Naive thymus-derived CD8-positive, alpha-beta T cell (primary cell): ENCODE measurements at regions of chr11 and their contacts with region 1.

Region 1: DNA sequence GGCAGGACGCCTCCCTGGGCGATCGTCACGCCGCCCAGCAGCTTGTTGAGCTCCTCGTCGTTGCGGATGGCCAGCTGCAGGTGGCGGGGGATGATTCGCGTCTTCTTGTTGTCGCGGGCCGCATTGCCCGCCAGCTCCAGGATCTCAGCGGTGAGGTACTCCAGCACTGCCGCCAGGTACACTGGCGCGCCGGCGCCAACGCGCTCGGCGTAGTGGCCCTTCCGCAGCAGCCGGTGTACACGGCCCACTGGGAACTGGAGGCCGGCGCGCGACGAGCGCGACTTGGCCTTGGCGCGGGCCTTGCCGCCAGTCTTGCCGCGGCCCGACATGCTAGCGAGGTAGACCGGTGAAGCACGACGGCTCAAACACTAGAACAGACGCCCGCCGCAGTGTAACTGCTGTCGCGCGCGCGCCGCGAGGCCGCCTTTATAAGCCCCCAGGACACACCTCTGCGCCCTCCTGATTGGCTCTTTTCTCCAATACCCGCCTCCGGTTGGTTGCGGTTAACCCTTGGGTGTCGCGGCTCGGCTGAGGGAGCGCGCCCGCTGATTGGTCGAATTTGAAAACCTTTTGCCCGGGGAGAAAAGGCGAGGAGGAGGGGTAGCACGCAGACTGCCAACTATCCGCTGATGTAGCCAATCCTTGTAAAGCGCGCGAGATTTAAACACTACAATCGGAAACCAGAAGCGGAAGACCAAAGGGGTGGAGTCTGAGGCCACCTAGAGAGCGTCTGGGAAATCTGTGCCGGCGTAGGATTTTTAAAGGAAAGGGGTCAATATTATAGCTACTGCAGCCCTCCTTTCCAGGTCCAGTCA is 6.4 kb downstream of the DPAGT1 start:
- DNase-seq: peak; percentile 96 to 100 (median 100)
- ATAC-seq: peak; percentile 88 to 91
- H3K4me3 Mint-ChIP-seq: peak overlapping the region; percentile 89 to 95 (median 92)
- H3K27ac Mint-ChIP-seq: peak overlapping the region; percentile 79 to 98 (median 93)
- H3K4me1 Mint-ChIP-seq: peaks cover 24 to 42% (median 37%) of the 10 kb centered on the region in 4 donors
- H3K27me3 Mint-ChIP-seq: peaks cover 0 to 3% (median 0%) of the 10 kb centered on the region in 5 donors

Region 2: GRCh38 chr11:119057000-119057769 is 38.1 kb before region 1 on chr11 and contains the start of gene HYOU1:
- POLR2A ChIA-PET with region 1: interaction called, 18 read pairs
- DNase-seq: peak; percentile 92 to 100 (median 98)
- ATAC-seq: peak; percentile 90 to 93
- H3K4me3 Mint-ChIP-seq: peak within 1 kb of the TSS; percentile 91 to 99 (median 96)
- H3K27ac Mint-ChIP-seq: peak within 1 kb of the TSS; percentile 93 to 99 (median 97)
- H3K4me1 Mint-ChIP-seq: peaks cover 18 to 47% (median 36%) of the 10 kb centered on the region in 4 donors
- H3K27me3 Mint-ChIP-seq: no peaks in the 10 kb centered on the region
- polyA plus RNA-seq, gene HYOU1: 14.1 to 17.1 (median 15.8) TPM

Region 3: DNA sequence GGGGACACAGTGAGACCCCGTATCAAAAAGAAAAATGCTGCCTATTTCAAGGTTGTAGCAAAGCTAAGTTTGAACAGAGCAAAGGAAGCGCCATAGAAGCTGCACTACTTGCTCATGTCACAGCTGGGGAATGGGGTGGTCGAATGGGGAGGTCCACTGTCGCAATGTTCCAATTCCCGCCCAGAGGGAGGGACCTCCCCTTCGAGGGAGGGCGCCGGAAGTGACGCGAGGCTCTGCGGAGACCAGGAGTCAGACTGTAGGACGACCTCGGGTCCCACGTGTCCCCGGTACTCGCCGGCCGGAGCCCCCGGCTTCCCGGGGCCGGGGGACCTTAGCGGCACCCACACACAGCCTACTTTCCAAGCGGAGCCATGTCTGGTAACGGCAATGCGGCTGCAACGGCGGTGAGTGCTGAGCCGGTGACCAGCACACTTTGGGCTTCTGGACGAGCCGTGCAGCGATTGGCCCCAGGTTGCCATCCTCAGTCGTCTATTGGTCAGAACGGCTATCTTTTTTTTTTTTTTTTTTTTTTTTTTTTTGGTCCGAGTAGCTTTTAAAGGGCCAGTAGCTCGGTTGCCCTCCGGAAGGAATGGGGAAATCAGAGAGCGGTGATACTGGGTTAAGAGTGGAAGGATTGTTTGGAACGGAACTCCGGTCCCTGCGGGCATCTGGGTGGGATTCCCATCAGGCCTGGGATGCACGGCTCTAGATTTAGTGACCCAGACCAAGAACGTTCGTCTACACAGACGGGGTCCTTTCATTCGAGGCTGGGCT is 10.4 kb before region 1 on chr11 and contains the start of gene HMBS:
- POLR2A ChIA-PET with region 1: interaction called, 41 read pairs
- DNase-seq: peak; percentile 79 to 97 (median 90)
- ATAC-seq: peak; percentile 89 to 95
- H3K4me3 Mint-ChIP-seq: peak within 1 kb of the TSS; percentile 87 to 97 (median 94)
- H3K27ac Mint-ChIP-seq: peak within 1 kb of the TSS; percentile 90 to 97 (median 96)
- H3K4me1 Mint-ChIP-seq: peaks cover 5 to 34% (median 25%) of the 10 kb centered on the region in 4 donors
- H3K27me3 Mint-ChIP-seq: no peaks in the 10 kb centered on the region
- polyA plus RNA-seq, gene HMBS: 20.0 to 32.7 (median 24.3) TPM

Region 4: DNA sequence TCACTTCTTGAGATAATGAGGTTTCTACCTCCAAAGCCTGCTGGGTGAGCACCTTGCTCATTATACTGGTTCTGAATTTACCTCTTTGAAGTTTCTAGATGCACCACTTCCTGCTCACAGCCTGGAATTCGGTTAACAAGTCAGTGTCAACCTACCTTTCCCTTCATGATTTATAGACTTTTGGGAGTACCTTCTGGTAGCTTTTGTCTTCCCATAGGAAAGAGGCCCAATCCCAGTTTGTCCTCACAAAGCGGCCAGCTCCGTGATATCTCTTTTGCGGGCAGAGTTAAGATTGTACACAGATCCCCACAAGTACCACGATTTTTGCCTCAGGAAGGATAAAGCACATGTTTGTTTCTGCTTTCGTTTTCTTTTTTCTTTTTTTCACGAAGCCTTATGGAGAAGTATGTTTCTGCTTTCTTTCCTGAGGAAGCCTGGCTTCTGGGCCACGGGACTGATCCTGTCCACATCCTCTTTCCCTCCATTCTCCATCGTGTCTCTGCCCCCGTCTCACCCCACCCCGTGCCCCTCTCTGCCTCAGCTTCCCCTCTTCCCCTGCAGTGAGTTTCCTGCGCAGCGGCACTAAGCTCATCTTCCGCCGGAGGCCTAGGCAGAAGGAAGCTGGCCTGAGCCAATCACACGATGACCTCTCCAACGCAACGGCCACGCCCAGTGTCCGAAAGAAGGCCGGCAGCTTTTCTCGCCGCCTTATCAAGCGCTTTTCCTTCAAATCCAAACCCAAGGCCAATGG is 20.4 kb after region 1 on chr11:
- POLR2A ChIA-PET with region 1: interaction called, 49 read pairs
- DNase-seq: peak in 5 of 10 donors; percentile 29 to 74 (median 57)
- ATAC-seq: peak; percentile 89 to 95
- H3K4me3 Mint-ChIP-seq: peak overlapping the region; percentile 79 to 91 (median 85)
- H3K27ac Mint-ChIP-seq: peak overlapping the region; percentile 92 to 99 (median 98)
- H3K4me1 Mint-ChIP-seq: peaks cover 25 to 54% (median 38%) of the 10 kb centered on the region in 4 donors
- H3K27me3 Mint-ChIP-seq: no peaks in the 10 kb centered on the region

Region 5: GRCh38 chr11:119121008-119121810 is 25.9 kb after region 1 on chr11 and contains the start of gene HINFP:
- POLR2A ChIA-PET with region 1: interaction called, 49 read pairs
- DNase-seq: peak; percentile 94 to 100 (median 99)
- ATAC-seq: peak; percentile 94 to 97
- H3K4me3 Mint-ChIP-seq: peak within 1 kb of the TSS; percentile 84 to 99 (median 92)
- H3K27ac Mint-ChIP-seq: peak within 1 kb of the TSS; percentile 95 to 98 (median 96)
- H3K4me1 Mint-ChIP-seq: peaks cover 26 to 46% (median 43%) of the 10 kb centered on the region in 4 donors
- H3K27me3 Mint-ChIP-seq: no peaks in the 10 kb centered on the region
- polyA plus RNA-seq, gene HINFP: 7.3 to 24.9 (median 7.5) TPM

Region 6: GRCh38 chr11:119134389-119134978 is 39.2 kb after region 1 on chr11:
- POLR2A ChIA-PET with region 1: no interaction called
- DNase-seq: no peak
- ATAC-seq: peak in 1 of 2 donors; percentile 35
- H3K4me3 Mint-ChIP-seq: no peak overlapping the region
- H3K27ac Mint-ChIP-seq: peak overlapping the region in 1 of 10 donors; percentile 14
- H3K4me1 Mint-ChIP-seq: peaks cover 0 to 8% (median 4%) of the 10 kb centered on the region in 4 donors
- H3K27me3 Mint-ChIP-seq: no peaks in the 10 kb centered on the region

Region 7: DNA sequence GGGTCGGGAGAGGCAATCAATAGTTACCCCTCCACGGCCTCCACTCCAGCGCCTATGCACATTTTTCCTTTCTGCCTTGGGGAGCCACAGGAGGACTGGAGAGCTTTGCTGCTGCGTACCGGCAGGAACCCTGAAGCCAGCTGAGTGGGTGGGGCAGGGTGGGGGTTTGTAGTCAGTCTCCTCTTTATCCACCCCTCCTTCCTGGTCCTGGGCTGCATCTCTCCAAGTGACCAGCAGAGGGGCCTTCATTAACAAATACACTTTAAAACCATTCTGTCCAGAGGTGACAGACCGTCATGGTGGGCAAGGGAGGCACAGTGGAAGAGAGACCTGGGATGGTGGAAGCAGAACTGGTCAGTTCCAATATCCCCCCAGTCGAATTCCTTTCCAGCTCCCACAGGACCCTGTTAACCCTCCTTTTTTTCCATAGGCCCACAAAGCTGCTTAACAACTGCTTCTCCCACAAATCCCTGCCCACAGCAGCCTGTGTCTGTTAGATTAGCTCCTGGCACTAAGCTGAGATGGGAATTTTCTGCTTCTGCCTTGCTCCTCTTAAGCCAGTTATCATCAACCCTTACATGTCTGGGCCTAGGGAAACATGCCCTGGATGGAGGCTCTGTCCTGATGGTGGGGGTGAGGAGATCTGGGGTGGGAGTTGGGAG is 49.7 kb after region 1 on chr11:
- POLR2A ChIA-PET with region 1: no interaction called
- DNase-seq: no peak
- ATAC-seq: no peak
- H3K4me3 Mint-ChIP-seq: no peak overlapping the region
- H3K27ac Mint-ChIP-seq: peak overlapping the region in 1 of 10 donors; percentile 29
- H3K4me1 Mint-ChIP-seq: peaks cover 10 to 25% (median 17%) of the 10 kb centered on the region in 4 donors
- H3K27me3 Mint-ChIP-seq: peaks cover 14 to 41% (median 29%) of the 10 kb centered on the region in 5 donors

Region 8: GRCh38 chr11:119196833-119197483 is 101.7 kb after region 1 on chr11:
- POLR2A ChIA-PET with region 1: interaction called, 10 read pairs
- DNase-seq: peak; percentile 26 to 86 (median 69)
- ATAC-seq: peak; percentile 97 to 99
- H3K4me3 Mint-ChIP-seq: no peak overlapping the region
- H3K27ac Mint-ChIP-seq: peak overlapping the region in 1 of 10 donors; percentile 0
- H3K4me1 Mint-ChIP-seq: peaks cover 4 to 7% (median 6%) of the 10 kb centered on the region in 4 donors
- H3K27me3 Mint-ChIP-seq: no peaks in the 10 kb centered on the region